ENCODE measurements at regions of chr14 and their contacts with region 1.

Region 1: DNA sequence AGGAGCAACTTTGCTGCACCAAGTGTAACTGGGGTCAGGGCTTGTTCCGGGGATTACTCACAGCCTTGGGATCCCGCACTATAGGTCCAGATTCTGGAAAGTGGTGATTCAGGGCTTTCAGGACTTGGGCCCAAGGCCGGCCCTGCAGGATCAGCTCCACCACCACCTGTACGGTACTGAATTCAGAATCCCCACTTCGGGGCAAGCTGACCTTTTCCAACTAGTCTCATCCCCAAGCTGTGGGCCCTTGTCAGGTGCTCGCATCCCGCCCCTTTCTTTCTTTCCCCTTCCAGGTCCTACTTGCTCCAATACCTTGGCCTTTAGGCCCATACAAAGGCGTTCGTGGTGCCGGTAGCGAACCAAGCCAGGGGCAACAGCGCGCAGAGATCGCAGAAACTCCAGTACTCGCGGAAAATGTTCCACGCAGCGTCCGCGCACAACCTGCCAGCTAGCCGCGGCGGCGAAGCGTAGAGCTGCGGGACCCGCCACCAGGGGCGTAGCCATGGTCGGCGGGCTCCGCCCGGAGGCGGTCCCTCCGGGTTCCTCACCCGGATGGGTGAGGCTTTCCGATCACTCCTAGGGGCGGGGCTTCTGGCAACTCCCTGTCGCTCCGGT is 487 bp downstream of the TINF2 start:
- DNase-seq: peak in 7 of 9 donors; percentile 94 to 98 (median 97)
- ATAC-seq: peak; percentile 89
- H3K4me3 ChIP-seq: peak overlapping the region; percentile 78
- H3K4me3 Mint-ChIP-seq: peak overlapping the region; percentile 84 to 99 (median 98)
- H3K27ac ChIP-seq: peak overlapping the region; percentile 98
- H3K27ac Mint-ChIP-seq: peak overlapping the region; percentile 98 to 100 (median 100)
- H3K4me1 ChIP-seq: peaks cover 40 to 41% of the 10 kb centered on the region in 2 donors
- H3K4me1 Mint-ChIP-seq: peaks cover 42 to 71% (median 62%) of the 10 kb centered on the region in 7 donors
- H3K27me3 ChIP-seq: no peaks in the 10 kb centered on the region
- H3K27me3 Mint-ChIP-seq: no peaks in the 10 kb centered on the region

Region 2: GRCh38 chr14:24135834-24136542 is 105.9 kb before region 1 on chr14 and contains the start of gene PSME1:
- CTCF ChIA-PET with region 1: interaction called, 5 read pairs
- POLR2A ChIA-PET with region 1: interaction called, 7 read pairs
- intact Hi-C with region 1: loop called in 1 of 2 experiments (anchors 1 kb)
- DNase-seq: peak; percentile 88 to 97 (median 92)
- ATAC-seq: peak; percentile 99
- H3K4me3 ChIP-seq: peak within 1 kb of the TSS; percentile 83
- H3K4me3 Mint-ChIP-seq: peak within 1 kb of the TSS; percentile 88 to 95 (median 92)
- H3K27ac ChIP-seq: peak within 1 kb of the TSS; percentile 97
- H3K27ac Mint-ChIP-seq: peak within 1 kb of the TSS; percentile 86 to 98 (median 93)
- H3K4me1 ChIP-seq: peaks cover 16 to 37% of the 10 kb centered on the region in 2 donors
- H3K4me1 Mint-ChIP-seq: peaks cover 48 to 71% (median 64%) of the 10 kb centered on the region in 7 donors
- H3K27me3 ChIP-seq: no peaks in the 10 kb centered on the region
- H3K27me3 Mint-ChIP-seq: no peaks in the 10 kb centered on the region
- total RNA-seq, gene PSME1: 189 to 583 (median 202) TPM

Region 3: GRCh38 chr14:24195191-24196070 is 46.5 kb before region 1 on chr14 and contains the start of gene TM9SF1:
- CTCF ChIA-PET with region 1: interaction called, 3 read pairs
- POLR2A ChIA-PET with region 1: interaction called, 26 read pairs
- intact Hi-C with region 1: loop called (anchors 1 kb)
- DNase-seq: peak; percentile 86 to 92 (median 90)
- ATAC-seq: peak; percentile 90
- H3K4me3 ChIP-seq: peak within 1 kb of the TSS; percentile 74
- H3K4me3 Mint-ChIP-seq: peak within 1 kb of the TSS; percentile 88 to 97 (median 93)
- H3K27ac ChIP-seq: peak within 1 kb of the TSS; percentile 99
- H3K27ac Mint-ChIP-seq: peak within 1 kb of the TSS; percentile 88 to 98 (median 98)
- H3K4me1 ChIP-seq: peaks cover 14 to 16% of the 10 kb centered on the region in 2 donors
- H3K4me1 Mint-ChIP-seq: peaks cover 38 to 69% (median 59%) of the 10 kb centered on the region in 7 donors
- H3K27me3 ChIP-seq: no peaks in the 10 kb centered on the region
- H3K27me3 Mint-ChIP-seq: no peaks in the 10 kb centered on the region
- total RNA-seq, gene TM9SF1: 16.2 to 40.5 (median 19.2) TPM

Region 4: DNA sequence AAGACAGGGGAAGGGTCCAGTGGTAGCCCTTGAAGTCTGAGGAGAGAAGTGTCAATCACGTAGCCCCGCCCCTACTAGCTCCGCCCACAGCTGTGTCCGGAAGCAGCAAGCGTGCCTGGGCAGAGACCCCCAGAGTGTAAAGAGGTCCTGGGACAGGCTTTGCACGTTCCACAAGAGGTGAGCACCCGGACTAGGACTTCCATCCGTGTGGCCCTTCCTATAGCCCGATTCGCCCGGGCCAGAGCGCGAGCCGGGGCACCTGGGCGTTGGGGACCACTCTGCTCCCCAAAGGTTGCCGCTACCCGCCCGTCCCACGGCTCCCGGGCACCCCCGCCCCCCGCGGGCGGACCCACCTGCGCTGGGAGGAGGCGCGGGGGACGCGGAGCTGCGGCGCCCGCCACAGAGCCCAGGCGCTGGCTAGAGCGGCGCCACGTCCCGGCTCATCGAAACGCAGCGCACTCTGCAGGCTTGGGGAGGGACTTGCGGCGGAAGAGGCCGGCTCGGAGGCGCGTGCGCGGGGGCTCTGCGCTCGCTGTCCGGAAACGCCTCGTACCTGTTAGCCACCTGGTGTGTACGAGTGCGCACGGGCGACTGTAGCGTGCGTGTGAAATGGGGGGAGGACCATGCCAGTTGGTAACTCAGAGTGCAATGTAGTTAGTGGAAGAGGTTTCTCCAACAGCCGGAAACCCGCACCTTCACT is 29.3 kb after region 1 on chr14 and contains the start of gene RABGGTA:
- CTCF ChIA-PET with region 1: interaction called, 24 read pairs
- POLR2A ChIA-PET with region 1: interaction called, 87 read pairs
- intact Hi-C with region 1: loop called (anchors 1 kb)
- DNase-seq: peak; percentile 87 to 97 (median 96)
- ATAC-seq: peak; percentile 91
- H3K4me3 ChIP-seq: peak within 1 kb of the TSS; percentile 80
- H3K4me3 Mint-ChIP-seq: peak within 1 kb of the TSS; percentile 79 to 95 (median 92)
- H3K27ac ChIP-seq: peak within 1 kb of the TSS; percentile 98
- H3K27ac Mint-ChIP-seq: peak within 1 kb of the TSS; percentile 93 to 100 (median 98)
- H3K4me1 ChIP-seq: peaks cover 17 to 23% of the 10 kb centered on the region in 2 donors
- H3K4me1 Mint-ChIP-seq: peaks cover 30 to 52% (median 46%) of the 10 kb centered on the region in 7 donors
- H3K27me3 ChIP-seq: no peaks in the 10 kb centered on the region
- H3K27me3 Mint-ChIP-seq: no peaks in the 10 kb centered on the region
- total RNA-seq, gene RABGGTA: 49.7 to 76.5 (median 55.5) TPM

Region 5: GRCh38 chr14:24332268-24332993 is 90.5 kb after region 1 on chr14:
- CTCF ChIA-PET with region 1: interaction called, 23 read pairs
- POLR2A ChIA-PET with region 1: interaction called, 18 read pairs
- intact Hi-C with region 1: loop called (anchors 1 kb)
- DNase-seq: peak; percentile 56 to 93 (median 87)
- ATAC-seq: peak; percentile 90
- H3K4me3 ChIP-seq: peak overlapping the region; percentile 43
- H3K4me3 Mint-ChIP-seq: peak overlapping the region; percentile 66 to 94 (median 83)
- H3K27ac ChIP-seq: no peak overlapping the region
- H3K27ac Mint-ChIP-seq: peak overlapping the region; percentile 57 to 93 (median 84)
- H3K4me1 ChIP-seq: peaks cover 37 to 59% of the 10 kb centered on the region in 2 donors
- H3K4me1 Mint-ChIP-seq: peaks cover 25 to 62% (median 40%) of the 10 kb centered on the region in 7 donors
- H3K27me3 ChIP-seq: peaks cover 7 to 13% of the 10 kb centered on the region in 2 donors
- H3K27me3 Mint-ChIP-seq: peaks cover 9 to 46% (median 17%) of the 10 kb centered on the region in 5 donors

Region 6: GRCh38 chr14:24678801-24679247 is 436.9 kb after region 1 on chr14:
- CTCF ChIA-PET with region 1: no interaction called
- POLR2A ChIA-PET with region 1: no interaction called
- intact Hi-C with region 1: loop called in 1 of 2 experiments (anchors 2 kb)
- DNase-seq: peak; percentile 45 to 85 (median 78)
- ATAC-seq: peak; percentile 96
- H3K4me3 ChIP-seq: peak overlapping the region; percentile 33
- H3K4me3 Mint-ChIP-seq: peak overlapping the region; percentile 71 to 93 (median 86)
- H3K27ac ChIP-seq: no peak overlapping the region
- H3K27ac Mint-ChIP-seq: peak overlapping the region; percentile 33 to 95 (median 70)
- H3K4me1 ChIP-seq: peaks cover 17 to 44% of the 10 kb centered on the region in 2 donors
- H3K4me1 Mint-ChIP-seq: peaks cover 35 to 65% (median 57%) of the 10 kb centered on the region in 7 donors
- H3K27me3 ChIP-seq: no peaks in the 10 kb centered on the region
- H3K27me3 Mint-ChIP-seq: peaks cover 0 to 4% (median 0%) of the 10 kb centered on the region in 5 donors